ENCODE measurements at regions of chr22 and their contacts with region 1.

Region 1: GRCh38 chr22:39117585-39118191 is 20.6 kb downstream of the APOBEC3H start:
- DNase-seq: peak; percentile 81
- H3K4me3 Mint-ChIP-seq: no peak overlapping the region
- H3K27ac Mint-ChIP-seq: no peak overlapping the region
- H3K4me1 Mint-ChIP-seq: peaks cover 21% of the 10 kb centered on the region
- H3K27me3 Mint-ChIP-seq: peaks cover 17% of the 10 kb centered on the region
- CTCF ChIP-seq: peak; percentile 61

Region 2: DNA sequence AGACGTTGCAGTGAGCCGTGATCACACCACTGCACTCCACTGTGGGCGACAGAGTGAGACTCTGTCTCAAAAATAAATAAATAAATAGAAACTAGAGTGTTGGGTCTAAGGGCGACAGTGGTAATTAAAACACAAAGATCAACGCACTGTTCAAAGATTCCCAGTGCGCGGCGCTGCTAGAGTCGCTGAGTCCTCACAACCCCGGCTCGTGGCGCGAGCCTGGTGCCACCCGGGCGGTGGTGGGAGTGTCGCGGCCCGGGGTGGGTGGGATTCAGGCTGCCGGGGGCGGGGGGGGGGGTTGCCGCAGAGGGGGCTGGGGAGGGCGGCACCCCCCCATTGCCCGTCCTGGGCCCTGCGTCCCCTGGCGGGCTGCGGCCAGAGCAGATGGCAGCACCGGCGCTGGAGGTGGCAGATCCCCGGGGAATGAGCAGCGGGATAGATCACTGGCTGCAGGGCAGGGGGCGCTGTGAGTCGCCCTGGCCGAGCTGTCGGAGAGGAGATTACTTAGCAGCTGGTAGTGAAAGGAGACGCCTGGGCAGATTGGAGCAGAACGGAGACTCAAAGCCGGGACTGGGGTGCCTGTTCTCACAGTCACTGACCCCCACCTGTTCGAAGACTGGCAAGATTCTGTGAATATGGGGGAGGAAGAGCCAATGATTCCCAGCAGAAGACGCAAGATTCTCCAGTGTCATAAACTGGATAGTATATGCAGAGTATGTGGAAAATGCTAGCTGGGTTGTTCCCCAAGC is 190.5 kb before region 1 on chr22:
- CTCF ChIA-PET with region 1: interaction called, 4 read pairs
- intact Hi-C with region 1: loop called (anchors 5 kb)
- DNase-seq: peak; percentile 91
- H3K4me3 Mint-ChIP-seq: peak overlapping the region; percentile 55
- H3K27ac Mint-ChIP-seq: peak overlapping the region; percentile 33
- H3K4me1 Mint-ChIP-seq: peaks cover 40% of the 10 kb centered on the region
- H3K27me3 Mint-ChIP-seq: no peaks in the 10 kb centered on the region
- CTCF ChIP-seq: peak; percentile 96

Region 3: GRCh38 chr22:39003165-39003638 is 114.5 kb before region 1 on chr22:
- CTCF ChIA-PET with region 1: interaction called, 4 read pairs
- intact Hi-C with region 1: loop called (anchors 1 kb)
- DNase-seq: peak; percentile 85
- H3K4me3 Mint-ChIP-seq: no peak overlapping the region
- H3K27ac Mint-ChIP-seq: no peak overlapping the region
- H3K4me1 Mint-ChIP-seq: no peaks in the 10 kb centered on the region
- H3K27me3 Mint-ChIP-seq: no peaks in the 10 kb centered on the region
- CTCF ChIP-seq: peak; percentile 76

Region 4: DNA sequence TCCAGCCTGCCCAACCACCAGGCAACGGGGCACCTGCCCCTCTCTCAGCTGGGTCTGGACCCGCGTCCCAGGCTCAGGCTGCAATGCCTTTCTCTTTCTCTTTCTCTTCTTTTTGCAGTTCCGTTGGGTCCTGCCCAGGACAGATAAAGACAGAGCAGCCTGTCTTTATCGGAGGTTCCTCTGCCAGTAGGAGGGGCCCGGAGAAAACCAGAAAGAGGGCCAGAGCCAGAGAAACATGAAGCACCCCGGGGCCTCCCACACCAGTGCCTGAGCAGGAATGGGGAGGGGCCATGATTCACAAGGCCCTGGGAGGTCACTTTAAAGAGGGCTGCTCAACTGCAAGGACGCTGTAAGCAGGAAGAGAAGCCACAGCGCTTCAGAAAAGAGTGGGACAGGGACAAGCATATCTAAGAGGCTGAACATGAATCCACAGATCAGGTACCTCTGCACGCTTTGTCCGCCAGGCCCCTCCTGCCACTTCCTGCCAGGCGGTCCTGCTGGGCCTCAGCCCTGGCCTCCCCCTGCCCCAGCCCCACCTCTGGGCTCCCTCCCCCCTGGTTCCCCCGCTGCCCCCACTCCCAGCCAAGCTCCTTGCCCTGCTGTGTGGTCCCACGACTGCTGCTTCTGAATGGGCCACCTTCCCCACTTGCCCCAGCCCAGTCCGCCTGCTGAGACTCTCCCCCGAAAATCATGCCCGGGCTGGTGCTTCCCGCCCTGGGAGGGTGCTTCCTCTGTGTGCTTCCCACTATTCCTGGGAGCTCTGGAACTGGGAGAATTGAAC is 103.6 kb before region 1 on chr22 and contains the start of gene APOBEC3C:
- CTCF ChIA-PET with region 1: interaction called, 4 read pairs
- intact Hi-C with region 1: loop called (anchors 2 kb)
- DNase-seq: peak; percentile 76
- H3K4me3 Mint-ChIP-seq: peak within 1 kb of the TSS; percentile 89
- H3K27ac Mint-ChIP-seq: peak within 1 kb of the TSS; percentile 94
- H3K4me1 Mint-ChIP-seq: no peaks in the 10 kb centered on the region
- H3K27me3 Mint-ChIP-seq: no peaks in the 10 kb centered on the region
- CTCF ChIP-seq: no peak
- total RNA-seq, gene APOBEC3C: 22.2 and 23.7 TPM in 2 replicates